Activated CD4-positive, alpha-beta T cell treated with anti-CD3 and anti-CD28 coated beads, Interleukin-2, amount 10 ng/mL, durations not matched to agents 24 days and 14 days (primary cell): ENCODE measurements at regions of chr6 and their contacts with region 1.

Region 1: GRCh38 chr6:44431118-44431725 is 43.7 kb downstream of the CDC5L start:
- DNase-seq: peak; percentile 82
- H3K4me3 Mint-ChIP-seq: no peak overlapping the region
- H3K27ac Mint-ChIP-seq: no peak overlapping the region
- H3K4me1 Mint-ChIP-seq: no peaks in the 10 kb centered on the region
- H3K27me3 Mint-ChIP-seq: no peaks in the 10 kb centered on the region

Region 2: DNA sequence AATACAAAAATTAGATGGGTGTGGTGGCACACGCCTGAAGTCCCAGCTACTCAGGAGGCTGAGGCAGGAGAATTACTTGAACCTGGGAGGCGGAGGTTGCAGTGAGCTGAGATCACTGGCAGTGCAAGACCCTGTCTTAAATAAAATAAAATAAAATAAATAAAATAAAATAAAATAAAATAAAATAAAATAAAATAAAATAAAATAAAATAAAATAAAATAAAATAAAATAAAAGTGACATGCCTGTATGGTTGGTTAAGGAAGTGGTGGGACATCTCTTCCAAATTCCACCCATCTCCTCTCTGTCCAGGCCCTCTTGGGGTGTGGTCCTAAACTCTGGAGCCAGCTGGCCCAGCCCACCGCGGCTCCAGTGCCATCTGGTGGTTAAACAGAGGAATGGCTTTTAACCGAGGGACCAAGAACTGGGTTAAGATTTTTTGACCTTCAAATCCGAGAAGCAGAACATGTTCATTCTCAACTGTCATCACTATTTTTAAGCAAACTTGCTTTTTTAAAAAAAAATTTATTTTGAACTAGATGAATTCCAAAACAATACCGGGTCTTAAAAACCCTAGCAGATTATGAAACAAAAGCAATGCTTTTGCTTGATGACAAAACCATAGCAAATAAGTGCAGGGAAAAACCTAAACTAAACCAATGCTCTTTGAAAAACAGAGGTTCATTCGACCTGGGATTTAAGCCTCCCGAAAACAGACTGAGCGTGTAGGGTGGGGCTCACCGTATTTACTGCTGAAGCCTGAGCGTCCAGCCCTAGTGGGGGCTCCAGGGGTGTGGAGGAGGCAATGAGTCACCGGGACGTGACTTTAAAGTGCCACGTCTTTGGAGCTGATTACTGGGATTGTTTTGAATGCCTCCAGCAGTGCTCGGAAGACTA is 25.1 kb after region 1 on chr6:
- intact Hi-C with region 1: loop called (anchors 1 kb)
- DNase-seq: peak; percentile 79
- H3K4me3 Mint-ChIP-seq: no peak overlapping the region
- H3K27ac Mint-ChIP-seq: no peak overlapping the region
- H3K4me1 Mint-ChIP-seq: no peaks in the 10 kb centered on the region
- H3K27me3 Mint-ChIP-seq: no peaks in the 10 kb centered on the region

Region 3: DNA sequence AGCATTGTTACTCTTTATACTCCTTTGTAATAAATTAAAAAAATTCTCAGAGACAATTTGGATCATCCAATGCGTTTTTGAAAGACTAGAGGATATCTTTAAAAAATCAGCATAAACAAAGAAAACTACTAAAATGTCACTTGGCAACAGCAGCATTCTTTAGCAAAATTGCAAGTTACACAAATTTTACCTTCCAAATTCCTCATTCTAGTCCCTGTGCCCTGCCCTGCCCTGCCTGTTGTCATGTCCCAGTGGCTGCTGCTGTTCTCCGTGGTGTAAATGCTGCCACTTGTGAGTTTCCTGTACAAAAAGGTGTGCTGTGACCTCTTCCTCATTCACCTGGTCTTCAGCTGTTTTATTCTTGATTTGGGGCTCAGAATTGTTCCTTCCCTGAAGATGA is 39.5 kb after region 1 on chr6:
- intact Hi-C with region 1: loop called (anchors 1 kb)
- DNase-seq: no peak
- H3K4me3 Mint-ChIP-seq: no peak overlapping the region
- H3K27ac Mint-ChIP-seq: no peak overlapping the region
- H3K4me1 Mint-ChIP-seq: no peaks in the 10 kb centered on the region
- H3K27me3 Mint-ChIP-seq: peaks cover 9% of the 10 kb centered on the region